Mammary epithelial cell (primary cell): ENCODE measurements at regions of chr1 and their contacts with region 1.

Region 1: DNA sequence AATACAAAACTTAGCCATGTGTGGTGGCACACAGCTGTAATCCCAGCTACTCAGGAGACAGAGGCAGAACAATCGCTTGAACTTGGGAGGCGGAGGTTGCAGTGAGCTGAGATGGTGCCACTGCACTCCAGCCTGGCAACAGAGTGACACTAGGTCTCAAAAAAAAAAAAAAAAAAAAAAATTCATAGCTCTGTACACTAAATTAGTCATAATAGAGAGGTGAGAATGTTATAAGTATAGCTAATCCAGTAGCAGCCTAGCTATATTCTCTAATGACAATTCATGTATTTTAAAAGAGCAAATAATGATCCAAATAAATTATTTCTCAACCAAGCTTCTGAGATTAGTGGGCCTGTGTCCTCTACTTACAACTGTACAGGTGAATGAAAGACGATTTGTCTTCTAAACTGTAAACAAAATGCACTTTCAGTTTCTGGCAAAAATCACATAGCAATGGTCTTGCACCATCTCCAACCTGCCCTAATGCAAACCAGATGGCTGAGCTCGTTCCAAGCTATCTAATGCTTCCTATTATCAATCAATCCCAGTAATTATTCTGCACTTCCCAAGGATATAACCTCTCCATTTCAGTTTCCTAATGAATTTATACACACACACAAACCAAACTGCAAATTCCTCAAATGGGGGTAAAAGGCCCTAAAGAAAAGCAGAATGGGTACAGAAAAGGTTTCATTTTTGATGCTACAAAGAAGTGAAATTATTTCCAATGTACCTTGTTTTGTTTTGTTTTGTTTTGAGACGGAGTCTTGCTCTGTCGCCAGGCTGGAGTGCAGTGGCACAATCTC is 56.5 kb downstream of the GATAD2B start:
- DNase-seq: no peak
- H3K4me3 ChIP-seq: no peak overlapping the region
- H3K27ac ChIP-seq: no peak overlapping the region
- H3K4me1 ChIP-seq: no peaks in the 10 kb centered on the region
- H3K27me3 ChIP-seq: no peaks in the 10 kb centered on the region
- CTCF ChIP-seq: no peak

Region 2: DNA sequence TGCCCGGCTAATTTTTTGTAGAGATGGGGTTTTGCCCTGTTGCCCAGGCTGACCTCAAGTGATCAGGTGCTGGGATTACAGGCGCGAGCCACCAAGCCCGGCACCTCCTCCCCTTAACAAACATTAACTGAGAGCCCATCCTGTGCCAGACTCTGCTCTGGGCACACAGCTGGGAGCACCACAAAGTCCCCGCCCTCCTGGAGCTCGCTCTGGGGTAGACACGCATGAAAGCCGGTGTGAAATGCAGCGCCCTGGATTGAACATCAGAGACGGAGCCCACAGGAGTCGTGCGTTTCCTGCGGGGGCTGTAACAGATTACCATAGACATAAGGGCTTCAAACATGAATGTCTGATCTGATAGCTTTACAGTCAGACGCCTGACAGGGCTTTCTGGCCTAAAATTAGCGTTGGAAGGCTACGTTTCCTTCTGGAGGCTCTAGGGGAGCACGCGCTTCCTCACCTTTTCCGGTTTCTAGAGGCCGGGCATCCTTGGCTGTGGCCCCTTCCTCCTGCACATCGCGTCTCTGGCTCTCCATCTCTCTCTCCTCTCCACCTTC is 76.7 kb before region 1 on chr1:
- CTCF ChIA-PET with region 1: interaction called, 13 read pairs
- dilution Hi-C with region 1: no loop called
- in situ Hi-C with region 1: no loop called
- intact Hi-C with region 1: no loop called
- DNase-seq: no peak
- H3K4me3 ChIP-seq: no peak overlapping the region
- H3K27ac ChIP-seq: no peak overlapping the region
- H3K4me1 ChIP-seq: peaks cover 4% of the 10 kb centered on the region
- H3K27me3 ChIP-seq: no peaks in the 10 kb centered on the region
- CTCF ChIP-seq: no peak

Region 3: GRCh38 chr1:153827168-153827964 is 38.9 kb before region 1 on chr1:
- CTCF ChIA-PET with region 1: no interaction called
- dilution Hi-C with region 1: no loop called
- in situ Hi-C with region 1: no loop called
- intact Hi-C with region 1: loop called (anchors 5 kb)
- DNase-seq: no peak
- H3K4me3 ChIP-seq: no peak overlapping the region
- H3K27ac ChIP-seq: no peak overlapping the region
- H3K4me1 ChIP-seq: no peaks in the 10 kb centered on the region
- H3K27me3 ChIP-seq: no peaks in the 10 kb centered on the region
- CTCF ChIP-seq: peak in 1 of 2 donors; percentile 5

Region 4: GRCh38 chr1:153903841-153904455 is 37.7 kb after region 1 on chr1:
- CTCF ChIA-PET with region 1: no interaction called
- dilution Hi-C with region 1: no loop called
- in situ Hi-C with region 1: no loop called
- intact Hi-C with region 1: loop called (anchors 5 kb)
- DNase-seq: no peak
- H3K4me3 ChIP-seq: no peak overlapping the region
- H3K27ac ChIP-seq: no peak overlapping the region
- H3K4me1 ChIP-seq: no peaks in the 10 kb centered on the region
- H3K27me3 ChIP-seq: no peaks in the 10 kb centered on the region
- CTCF ChIP-seq: no peak